ENCODE measurements at regions of chr17 and their contacts with region 1.

Region 1: GRCh38 chr17:76523084-76524037 is 14.1 kb downstream of the CYGB start:
- DNase-seq: peak; percentile 75 to 93
- ATAC-seq: peak; percentile 79 to 88
- H3K4me3 ChIP-seq: no peak overlapping the region
- H3K27ac ChIP-seq: peak overlapping the region in 1 of 2 experiments; percentile 47; a peak in 1 of 6 replicates
- H3K4me1 ChIP-seq: peaks cover 20% of the 10 kb centered on the region
- CTCF ChIP-seq: peak; percentile 100
- EP300 ChIP-seq: no peak
- POLR2A ChIP-seq: no peak
- RAD21 ChIP-seq: peak; percentile 97 to 99

Region 2: DNA sequence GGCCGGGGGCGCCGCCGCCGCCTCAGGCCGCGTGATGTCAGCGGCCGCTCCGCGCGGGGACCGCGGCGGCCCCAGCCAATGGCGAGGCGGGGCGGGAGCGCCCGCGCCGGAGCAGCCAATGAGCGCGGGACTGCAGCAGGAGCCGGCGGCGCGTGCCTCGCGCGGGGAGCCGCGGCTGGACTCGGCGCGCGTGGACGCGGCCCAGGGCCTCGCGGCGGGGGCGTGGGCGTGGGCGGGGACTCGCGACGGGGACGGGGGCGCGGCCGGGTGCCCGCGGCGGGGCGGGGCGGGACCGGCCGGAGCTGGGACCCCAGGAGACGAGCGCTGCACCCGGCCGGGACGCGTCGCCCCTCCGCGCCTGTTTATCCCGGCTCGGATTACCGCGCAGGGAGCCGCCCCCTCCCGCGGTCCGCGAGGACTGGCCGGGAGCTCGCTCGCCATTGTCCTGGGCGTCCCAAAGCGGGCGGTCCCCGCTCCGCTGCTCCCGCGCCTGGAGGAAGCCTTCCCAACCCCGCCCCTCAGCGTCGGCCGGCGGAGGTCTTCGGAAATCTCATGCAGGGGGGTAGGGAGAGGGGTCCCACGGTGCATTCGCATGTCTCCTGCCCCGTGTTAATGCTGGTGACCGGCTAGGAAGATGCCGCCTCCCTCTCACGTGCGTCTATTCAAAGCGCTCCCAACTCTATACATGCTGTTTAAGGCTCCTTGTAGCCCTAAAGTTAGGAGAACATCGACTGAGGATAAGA is 282.7 kb before region 1 on chr17 and contains the start of gene RNF157:
- CTCF ChIA-PET with region 1: no interaction called
- POLR2A ChIA-PET with region 1: no interaction called
- DNase-seq: peak; percentile 60 to 81
- ATAC-seq: peak; percentile 87 to 91
- H3K4me3 ChIP-seq: peak within 1 kb of the TSS; percentile 54
- H3K27ac ChIP-seq: peak within 1 kb of the TSS; percentile 63 to 84
- H3K4me1 ChIP-seq: peaks cover 24% of the 10 kb centered on the region
- CTCF ChIP-seq: no peak
- EP300 ChIP-seq: no peak
- POLR2A ChIP-seq: peak; percentile 33
- RAD21 ChIP-seq: no peak
- polyA plus RNA-seq, gene RNF157: 7.2 and 8.2 TPM in 2 replicates

Region 3: DNA sequence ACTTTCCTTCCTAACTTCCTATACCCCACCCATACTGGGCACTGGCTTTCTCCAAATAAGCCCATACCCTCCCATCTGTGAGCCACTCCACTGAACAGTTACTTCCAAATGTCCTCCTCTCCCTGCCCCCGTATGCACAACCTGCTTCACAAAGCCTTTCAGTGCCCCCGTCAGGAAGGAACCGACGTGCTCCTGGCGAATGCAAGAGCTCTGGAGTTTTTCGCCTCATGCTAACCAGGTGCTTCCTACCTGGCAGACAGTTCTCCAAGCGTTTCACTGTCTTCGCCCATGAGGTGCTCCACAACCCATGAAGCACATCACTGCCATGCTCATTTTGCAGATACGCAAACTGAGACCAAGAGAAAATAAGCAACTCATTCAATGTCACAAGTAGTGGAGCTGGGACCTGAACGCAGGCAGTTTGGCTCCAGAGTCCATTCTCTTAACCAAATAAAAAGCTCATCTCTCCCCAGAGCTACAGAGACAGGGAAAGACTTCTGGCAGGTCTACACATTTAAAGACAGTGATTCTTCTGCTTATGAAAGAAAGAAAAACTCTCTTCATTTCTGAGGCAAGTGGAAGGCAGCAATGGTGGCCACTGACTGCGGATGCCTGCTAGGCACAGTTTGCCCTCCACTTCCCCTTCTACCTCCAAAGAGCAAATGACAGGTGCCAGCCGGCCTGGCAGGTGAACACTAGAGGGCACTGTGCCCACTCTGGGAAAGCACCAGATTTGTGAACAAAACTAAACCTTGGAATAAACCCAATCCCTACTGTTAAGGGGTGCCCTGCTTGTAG is 115.1 kb before region 1 on chr17:
- CTCF ChIA-PET with region 1: interaction called, 16 read pairs
- POLR2A ChIA-PET with region 1: no interaction called
- DNase-seq: peak; percentile 73 to 83
- ATAC-seq: peak; percentile 76 to 86
- H3K4me3 ChIP-seq: no peak overlapping the region
- H3K27ac ChIP-seq: no peak overlapping the region
- H3K4me1 ChIP-seq: no peaks in the 10 kb centered on the region
- CTCF ChIP-seq: peak; percentile 98
- EP300 ChIP-seq: no peak
- POLR2A ChIP-seq: no peak
- RAD21 ChIP-seq: peak; percentile 90 to 92

Region 4: DNA sequence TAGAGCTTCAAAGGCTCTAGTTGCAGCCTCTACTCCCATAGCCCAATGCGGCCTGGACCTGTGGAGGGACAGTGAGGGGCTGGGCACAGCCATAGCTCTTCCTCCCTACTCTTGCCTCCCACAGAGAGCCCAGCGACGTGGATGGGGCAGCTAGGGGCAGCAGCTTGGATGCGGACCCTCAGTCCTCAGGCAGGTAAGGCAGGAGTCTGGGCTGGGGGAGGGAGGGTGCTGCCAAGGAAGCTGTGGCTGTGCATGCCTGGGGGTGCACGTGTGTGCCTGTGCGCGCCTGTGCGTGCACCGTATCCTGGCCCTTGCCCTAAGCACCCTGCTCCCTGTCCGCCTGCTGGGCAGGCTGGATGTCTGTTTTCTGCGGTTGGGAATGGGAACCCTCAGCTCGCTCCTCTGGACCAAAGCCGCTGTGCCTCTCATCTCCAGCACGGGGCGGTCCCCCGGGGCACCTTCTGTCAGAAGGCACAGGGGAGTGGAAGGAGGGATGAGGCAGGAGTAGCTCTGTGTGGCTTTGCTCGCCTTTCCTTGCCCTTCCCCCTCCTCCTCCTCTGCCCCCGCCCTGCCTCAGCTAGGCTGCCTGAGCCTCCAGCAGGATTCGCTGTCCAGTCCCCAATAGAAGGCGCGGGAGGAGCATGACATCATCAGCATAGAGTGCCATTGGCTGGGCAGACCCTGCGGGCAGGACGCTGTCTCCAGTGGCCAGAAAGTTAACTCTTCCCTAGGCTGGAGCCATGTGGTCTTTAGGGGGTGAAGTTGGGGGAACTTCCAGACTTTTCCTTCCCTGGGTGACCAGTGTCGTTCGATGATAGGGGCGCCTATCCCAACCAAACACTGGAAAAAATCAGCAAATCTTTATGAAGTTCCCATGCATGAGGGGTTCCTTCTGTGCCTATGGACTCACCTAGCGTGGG is 17.3 kb after region 1 on chr17:
- CTCF ChIA-PET with region 1: interaction called, 362 read pairs
- POLR2A ChIA-PET with region 1: no interaction called
- DNase-seq: peak; percentile 94 to 100
- ATAC-seq: peak; percentile 93 to 99
- H3K4me3 ChIP-seq: peak overlapping the region; percentile 30
- H3K27ac ChIP-seq: peak overlapping the region; percentile 79 to 86
- H3K4me1 ChIP-seq: peaks cover 13% of the 10 kb centered on the region
- CTCF ChIP-seq: no peak
- EP300 ChIP-seq: no peak
- POLR2A ChIP-seq: peak; percentile 84
- RAD21 ChIP-seq: no peak

Region 5: DNA sequence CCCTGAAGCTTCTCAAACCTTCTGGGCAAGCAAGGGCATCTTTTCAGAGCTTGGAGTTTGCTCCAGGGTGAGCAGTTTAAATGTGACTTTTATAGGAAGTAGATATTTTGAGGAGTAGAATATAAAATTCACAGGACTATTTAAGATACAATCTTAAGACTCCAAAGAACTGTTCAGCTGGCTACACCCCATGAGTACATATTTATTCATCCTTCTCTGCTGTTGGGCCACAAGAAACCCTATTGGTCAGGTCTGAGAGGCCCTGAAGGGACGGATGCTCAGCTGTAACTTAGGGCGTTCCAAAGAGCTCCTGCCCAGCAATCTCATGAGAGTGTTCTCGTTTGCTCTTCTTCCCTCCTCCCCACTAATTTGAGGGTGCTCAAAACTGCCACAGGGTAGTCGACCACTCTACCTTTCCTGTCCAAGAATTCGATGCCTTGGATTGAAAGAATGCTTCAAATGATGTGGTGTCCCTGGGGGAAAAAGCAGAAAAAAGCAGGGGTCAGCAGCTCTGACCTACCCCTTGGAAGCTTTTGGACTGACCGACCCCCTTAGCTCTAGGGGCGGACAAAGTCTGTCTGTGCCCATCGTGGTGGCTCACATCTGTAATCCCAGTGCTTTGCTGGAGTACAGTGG is 55.1 kb after region 1 on chr17:
- CTCF ChIA-PET with region 1: interaction called, 19 read pairs
- POLR2A ChIA-PET with region 1: no interaction called
- DNase-seq: no peak
- ATAC-seq: peak in 1 of 2 experiments; percentile 32; a peak in 1 of 6 replicates
- H3K4me3 ChIP-seq: no peak overlapping the region
- H3K27ac ChIP-seq: no peak overlapping the region
- H3K4me1 ChIP-seq: no peaks in the 10 kb centered on the region
- CTCF ChIP-seq: no peak
- EP300 ChIP-seq: no peak
- POLR2A ChIP-seq: no peak
- RAD21 ChIP-seq: no peak

Region 6: DNA sequence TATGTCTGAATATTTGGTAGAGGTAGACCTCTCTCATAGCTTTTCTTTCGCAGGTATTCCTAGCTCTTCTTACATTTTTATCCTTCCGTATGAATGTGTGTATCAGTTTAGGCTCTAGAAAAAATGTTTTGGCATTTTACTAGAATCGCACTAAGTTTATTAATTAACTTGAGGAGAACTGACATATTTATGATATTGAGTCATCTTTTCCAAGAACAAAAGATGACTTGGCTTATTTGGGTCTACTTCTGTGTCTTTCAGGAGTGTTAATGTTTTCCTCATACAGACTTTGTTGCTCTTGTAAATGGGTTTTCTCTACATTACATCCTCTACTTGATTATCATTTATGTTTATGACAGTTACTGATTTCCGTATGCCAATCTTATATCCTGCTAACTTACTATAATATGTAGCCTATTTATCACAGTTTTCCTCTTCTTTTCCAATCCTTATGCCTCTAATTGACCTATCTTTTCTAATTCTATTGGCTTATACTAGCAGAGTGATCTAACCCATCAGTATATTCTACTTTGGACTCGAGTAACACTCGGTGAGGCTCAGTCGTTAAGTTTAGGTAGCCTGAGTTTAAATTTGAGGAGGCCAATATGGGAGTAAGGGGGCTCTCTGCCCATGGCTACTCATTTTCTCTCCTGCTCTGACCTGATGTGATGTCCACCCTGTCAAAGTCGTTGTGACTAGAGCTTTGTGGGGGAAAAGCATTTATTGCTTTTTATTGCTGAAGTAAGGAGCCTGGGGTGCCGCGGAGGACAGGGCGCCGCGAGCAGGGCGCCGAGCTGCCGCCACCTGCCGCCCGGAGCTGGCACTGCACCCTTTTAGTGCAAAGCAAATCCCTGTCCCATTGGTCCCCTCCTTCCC is 100.1 kb after region 1 on chr17:
- CTCF ChIA-PET with region 1: interaction called, 173 read pairs
- POLR2A ChIA-PET with region 1: no interaction called
- DNase-seq: peak; percentile 74 to 91
- ATAC-seq: peak; percentile 85 to 96
- H3K4me3 ChIP-seq: peak overlapping the region; percentile 3; the same call in 1 of the 3 replicates
- H3K27ac ChIP-seq: peak overlapping the region; percentile 59 to 77; a peak in 5 of 6 replicates
- H3K4me1 ChIP-seq: peaks cover 11% of the 10 kb centered on the region
- CTCF ChIP-seq: peak; percentile 98
- EP300 ChIP-seq: no peak
- POLR2A ChIP-seq: no peak
- RAD21 ChIP-seq: peak; percentile 83 to 90

Region 7: DNA sequence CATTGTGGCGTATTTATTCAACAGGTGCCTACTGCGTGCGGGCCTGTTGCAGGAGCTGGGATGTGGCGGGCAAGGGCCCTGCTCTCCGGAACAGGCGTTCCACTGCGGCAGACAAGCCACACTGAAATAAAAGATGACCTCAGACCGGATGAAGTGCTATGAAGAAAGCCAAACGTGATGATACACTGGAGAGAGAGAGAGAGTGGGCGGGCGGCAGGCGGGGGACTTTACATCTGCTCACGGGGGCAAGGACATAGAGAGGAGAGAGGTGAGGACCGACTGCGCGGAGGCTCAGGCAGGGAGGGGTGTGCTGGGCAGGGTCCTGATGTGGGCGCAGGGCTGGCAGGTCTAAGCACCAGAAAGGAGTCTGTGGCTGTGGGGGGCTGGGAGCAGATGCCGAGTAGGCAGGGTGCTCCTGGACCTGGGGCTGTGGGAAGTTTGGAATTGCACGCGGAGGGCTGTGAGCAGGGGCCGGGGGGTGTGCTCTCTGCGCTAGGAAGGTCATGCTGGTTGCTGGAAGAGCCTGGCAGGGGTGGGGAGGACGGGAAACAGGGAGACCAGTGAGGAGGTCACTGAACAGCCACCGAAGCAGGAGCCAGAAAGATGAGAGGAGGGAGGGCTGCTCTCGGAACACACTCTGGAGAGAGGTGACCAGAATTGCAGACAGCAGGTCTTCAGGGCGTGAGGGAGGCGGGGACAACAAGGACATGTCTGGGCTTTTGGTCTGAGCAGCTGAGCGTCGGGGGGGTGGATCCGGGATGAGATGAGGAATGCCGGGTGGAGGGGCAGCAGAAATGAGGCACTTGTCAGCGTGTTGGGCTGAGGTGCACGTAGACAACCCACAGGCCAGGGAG is 177.5 kb after region 1 on chr17:
- CTCF ChIA-PET with region 1: interaction called, 14 read pairs
- POLR2A ChIA-PET with region 1: no interaction called
- DNase-seq: no peak
- ATAC-seq: peak; percentile 14; a peak in 3 of 6 replicates
- H3K4me3 ChIP-seq: no peak overlapping the region
- H3K27ac ChIP-seq: no peak overlapping the region
- H3K4me1 ChIP-seq: no peaks in the 10 kb centered on the region
- CTCF ChIP-seq: no peak
- EP300 ChIP-seq: no peak
- POLR2A ChIP-seq: no peak
- RAD21 ChIP-seq: no peak

Region 8: GRCh38 chr17:76775021-76775600 is 251.8 kb after region 1 on chr17:
- CTCF ChIA-PET with region 1: no interaction called
- POLR2A ChIA-PET with region 1: no interaction called
- DNase-seq: no peak
- ATAC-seq: no peak
- H3K4me3 ChIP-seq: no peak overlapping the region
- H3K27ac ChIP-seq: no peak overlapping the region
- H3K4me1 ChIP-seq: peaks cover 6% of the 10 kb centered on the region; the same call in 2 of the 3 replicates
- CTCF ChIP-seq: no peak
- EP300 ChIP-seq: no peak
- POLR2A ChIP-seq: no peak
- RAD21 ChIP-seq: no peak

Region 9: GRCh38 chr17:77385750-77386501 is 862.6 kb after region 1 on chr17:
- CTCF ChIA-PET with region 1: no interaction called
- POLR2A ChIA-PET with region 1: interaction called, 11 read pairs
- DNase-seq: no peak
- ATAC-seq: peak in 1 of 2 experiments; percentile 16; a peak in 3 of 6 replicates
- H3K4me3 ChIP-seq: no peak overlapping the region
- H3K27ac ChIP-seq: peak overlapping the region; percentile 39 to 74; a peak in 4 of 6 replicates
- H3K4me1 ChIP-seq: peaks cover 88% of the 10 kb centered on the region
- CTCF ChIP-seq: no peak
- EP300 ChIP-seq: no peak
- POLR2A ChIP-seq: no peak
- RAD21 ChIP-seq: no peak